HEK293 (cell line): ENCODE measurements at regions of chr11 and their contacts with region 1.

Region 1: DNA sequence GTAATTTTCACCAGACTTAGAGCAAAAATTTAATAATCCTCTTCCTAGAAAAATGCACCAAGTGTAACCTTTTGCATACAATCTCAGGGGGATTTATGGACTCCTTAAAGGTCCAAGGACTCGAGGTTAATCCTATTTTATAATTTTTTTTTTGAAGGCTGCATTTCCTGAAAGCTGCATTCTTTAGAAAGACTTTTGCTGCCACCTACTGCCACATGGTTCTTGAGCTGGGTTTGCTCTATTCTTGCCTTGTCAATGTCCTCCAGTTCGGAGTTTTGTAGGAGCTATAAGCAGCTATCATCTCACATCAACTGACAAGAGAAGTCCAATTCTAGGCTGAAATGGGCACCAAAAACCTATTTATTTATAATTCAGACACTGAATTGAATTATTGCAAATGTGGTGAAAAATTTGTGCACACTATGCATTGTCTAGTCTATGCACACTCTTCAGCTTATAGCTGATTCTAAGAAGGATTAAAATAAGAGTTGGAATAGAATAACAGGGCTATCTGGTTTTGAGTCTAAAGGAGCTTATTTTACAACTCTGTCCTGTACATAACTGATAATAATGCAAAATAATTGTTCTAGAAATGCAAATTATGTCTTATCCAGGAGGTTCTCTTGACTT is 31.3 kb downstream of the TRAF6 start:
- H3K4me3 ChIP-seq: no peak overlapping the region
- H3K27ac ChIP-seq: no peak overlapping the region
- H3K4me1 ChIP-seq: no peaks in the 10 kb centered on the region
- CTCF ChIP-seq: peak; percentile 42; the same call in 1 of the 2 replicates

Region 2: DNA sequence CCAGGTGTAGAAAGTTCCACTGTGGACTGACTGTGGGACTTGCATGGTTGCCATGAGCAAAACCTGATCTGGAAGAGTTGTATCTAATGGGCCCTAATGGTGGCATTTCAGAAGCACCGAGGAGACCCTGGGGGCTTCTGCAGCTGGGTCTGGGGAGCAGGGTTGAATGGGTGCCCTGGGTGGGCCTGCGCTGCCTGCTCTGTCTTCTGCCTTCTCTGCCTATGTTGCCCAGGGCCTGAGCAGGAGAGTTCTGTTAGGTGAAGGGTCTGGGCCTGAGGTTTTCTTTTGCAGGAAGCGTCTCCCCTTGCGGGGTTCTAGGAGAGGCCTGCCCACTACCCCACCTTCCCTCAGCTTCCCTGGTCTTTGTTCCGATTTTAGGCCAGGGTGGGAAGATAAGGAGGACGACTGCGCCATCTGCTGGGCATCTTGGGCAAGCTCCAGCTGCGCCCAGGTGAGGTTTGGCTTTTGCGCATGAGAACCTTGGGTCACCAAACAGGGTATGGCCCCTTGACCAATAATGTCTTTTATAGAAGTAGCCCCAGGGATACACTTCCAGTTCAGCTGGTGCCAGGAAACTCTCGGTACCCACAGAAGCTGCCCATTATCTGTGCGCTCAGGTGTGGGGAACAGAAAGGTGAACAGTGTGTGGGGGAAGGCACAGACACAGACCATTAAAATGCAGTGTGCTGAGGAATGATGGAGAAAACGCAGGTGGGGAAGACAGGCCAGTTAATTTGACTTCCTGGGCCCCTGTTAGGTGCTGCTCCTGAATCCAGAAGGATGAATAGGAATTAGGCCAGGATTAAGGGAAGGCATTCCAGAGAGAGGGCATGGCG is 212.8 kb before region 1 on chr11:
- CTCF ChIA-PET with region 1: interaction called, 63 read pairs
- POLR2A ChIA-PET with region 1: no interaction called
- H3K4me3 ChIP-seq: no peak overlapping the region
- H3K27ac ChIP-seq: no peak overlapping the region
- H3K4me1 ChIP-seq: no peaks in the 10 kb centered on the region
- CTCF ChIP-seq: peak; percentile 21; the same call in 1 of the 2 replicates

Region 3: GRCh38 chr11:36376888-36377758 is 101.7 kb before region 1 on chr11:
- CTCF ChIA-PET with region 1: interaction called, 13 read pairs
- POLR2A ChIA-PET with region 1: interaction called, 4 read pairs
- H3K4me3 ChIP-seq: peak overlapping the region; percentile 58
- H3K27ac ChIP-seq: no peak overlapping the region; the same call in 1 of the 2 replicates
- H3K4me1 ChIP-seq: no peaks in the 10 kb centered on the region
- CTCF ChIP-seq: peak; percentile 78

Region 4: GRCh38 chr11:36412781-36413383 is 65.9 kb before region 1 on chr11:
- CTCF ChIA-PET with region 1: no interaction called
- POLR2A ChIA-PET with region 1: no interaction called
- H3K4me3 ChIP-seq: no peak overlapping the region
- H3K27ac ChIP-seq: no peak overlapping the region
- H3K4me1 ChIP-seq: no peaks in the 10 kb centered on the region
- CTCF ChIP-seq: no peak

Region 5: GRCh38 chr11:36492724-36493304 is 14.0 kb after region 1 on chr11:
- CTCF ChIA-PET with region 1: interaction called, 22 read pairs
- POLR2A ChIA-PET with region 1: interaction called, 4 read pairs
- H3K4me3 ChIP-seq: no peak overlapping the region
- H3K27ac ChIP-seq: no peak overlapping the region
- H3K4me1 ChIP-seq: no peaks in the 10 kb centered on the region
- CTCF ChIP-seq: no peak

Region 6: DNA sequence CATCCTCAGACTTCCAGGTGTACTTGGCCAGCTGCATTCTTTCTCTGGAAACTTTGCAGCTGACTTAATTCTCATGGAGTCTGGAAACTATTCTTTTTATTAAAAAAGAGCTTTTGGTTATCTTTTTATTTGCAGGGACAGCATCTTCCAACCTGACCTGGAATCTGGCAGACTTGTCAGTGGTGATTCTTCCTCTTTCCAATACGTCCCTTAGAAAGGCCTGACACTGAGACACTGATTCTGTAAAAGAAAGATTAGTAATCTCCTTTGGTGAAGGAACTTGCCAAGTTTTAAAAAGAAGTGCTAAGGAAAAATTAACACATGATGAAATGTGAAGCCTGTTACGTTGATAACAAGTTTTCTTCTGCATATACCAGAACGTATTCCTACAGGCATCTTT is 560.1 kb after region 1 on chr11:
- CTCF ChIA-PET with region 1: no interaction called
- POLR2A ChIA-PET with region 1: no interaction called
- H3K4me3 ChIP-seq: no peak overlapping the region
- H3K27ac ChIP-seq: no peak overlapping the region
- H3K4me1 ChIP-seq: no peaks in the 10 kb centered on the region
- CTCF ChIP-seq: no peak